Pancreas (tissue), 10 donors: ENCODE measurements at regions of chr19 and their contacts with region 1.

Region 1: GRCh38 chr19:3163230-3163886 is 15.2 kb upstream of the S1PR4 start:
- DNase-seq: peak in 5 of 6 donors; percentile 38 to 86 (median 70)
- ATAC-seq: peak; percentile 86 to 96 (median 94)
- H3K4me3 ChIP-seq: no peak overlapping the region
- H3K27ac ChIP-seq: no peak overlapping the region
- H3K4me1 ChIP-seq: peaks cover 0 to 4% (median 0%) of the 10 kb centered on the region in 3 donors
- H3K27me3 ChIP-seq: no peaks in the 10 kb centered on the region
- CTCF ChIP-seq: peak; percentile 81 to 97 (median 90)

Region 2: DNA sequence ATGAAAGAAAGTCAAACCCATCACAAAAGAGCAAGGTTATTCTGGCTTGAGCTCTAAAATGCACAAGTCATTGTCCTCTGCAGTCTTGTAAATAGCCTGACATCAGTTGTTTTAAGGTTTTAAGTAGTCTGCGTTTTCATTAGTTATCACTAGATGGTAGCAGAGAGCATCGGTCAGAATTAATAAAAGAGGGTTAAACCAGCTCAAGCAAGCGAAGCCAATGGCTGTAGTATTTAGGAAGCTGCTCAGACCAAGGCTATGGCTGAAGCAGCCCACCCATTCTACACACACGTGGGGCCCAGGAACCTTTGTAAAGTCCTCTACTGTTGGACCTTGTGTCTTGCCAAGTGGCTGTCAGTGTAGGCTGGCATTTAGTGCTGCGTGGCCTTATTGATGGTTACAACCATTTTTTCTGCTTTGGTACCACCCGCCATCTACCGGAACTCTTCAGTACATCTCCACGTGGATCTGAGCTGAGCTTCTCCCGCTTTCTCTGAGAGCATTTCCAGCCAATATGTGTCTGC is 275.9 kb before region 1 on chr19:
- intact Hi-C with region 1: loop called in 2 of 3 experiments (anchors 10 kb)
- DNase-seq: peak in 1 of 6 donors; percentile 35
- ATAC-seq: peak; percentile 66 to 97 (median 90)
- H3K4me3 ChIP-seq: no peak overlapping the region
- H3K27ac ChIP-seq: no peak overlapping the region
- H3K4me1 ChIP-seq: no peaks in the 10 kb centered on the region
- H3K27me3 ChIP-seq: no peaks in the 10 kb centered on the region
- CTCF ChIP-seq: peak in 3 of 4 donors; percentile 50 to 58 (median 57)

Region 3: GRCh38 chr19:2950286-2951124 is 212.9 kb before region 1 on chr19:
- intact Hi-C with region 1: loop called in 1 of 3 experiments (anchors 10 kb)
- DNase-seq: peak; percentile 100
- ATAC-seq: peak; percentile 88 to 94 (median 92)
- H3K4me3 ChIP-seq: peak overlapping the region; percentile 43 to 82 (median 66)
- H3K27ac ChIP-seq: peak overlapping the region; percentile 82 to 95 (median 91)
- H3K4me1 ChIP-seq: peaks cover 11 to 19% (median 16%) of the 10 kb centered on the region in 3 donors
- H3K27me3 ChIP-seq: no peaks in the 10 kb centered on the region
- CTCF ChIP-seq: no peak

Region 4: DNA sequence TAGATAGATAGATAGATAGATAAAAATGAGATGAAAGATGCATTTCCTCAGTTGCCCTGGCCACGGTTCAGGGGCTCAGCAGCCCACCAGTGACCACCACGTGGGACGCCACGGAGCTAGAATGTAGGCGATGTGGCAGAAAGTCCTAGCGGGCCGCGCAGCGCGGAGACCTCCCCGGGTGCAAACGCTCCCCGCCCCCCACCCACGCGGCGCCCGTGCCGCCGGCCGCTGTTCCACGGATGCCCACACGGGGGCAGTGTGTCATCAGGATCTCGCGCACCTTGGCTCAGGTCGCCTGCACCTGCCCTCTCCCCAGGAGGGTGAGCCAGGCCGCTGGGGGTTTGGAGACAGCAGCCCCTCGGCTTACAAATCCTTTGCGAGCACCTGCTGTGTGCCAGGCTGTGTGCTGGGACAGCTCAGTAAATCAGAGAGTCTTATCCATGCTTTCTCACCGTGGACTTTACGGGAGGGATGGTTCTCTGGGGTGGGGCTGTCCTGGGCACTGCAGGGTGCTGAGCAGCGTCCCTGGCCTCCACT is 87.4 kb before region 1 on chr19:
- intact Hi-C with region 1: loop called in 1 of 3 experiments (anchors 10 kb)
- DNase-seq: peak; percentile 47 to 92 (median 78)
- ATAC-seq: peak; percentile 89 to 99 (median 91)
- H3K4me3 ChIP-seq: no peak overlapping the region
- H3K27ac ChIP-seq: no peak overlapping the region
- H3K4me1 ChIP-seq: no peaks in the 10 kb centered on the region
- H3K27me3 ChIP-seq: no peaks in the 10 kb centered on the region
- CTCF ChIP-seq: peak; percentile 90 to 96 (median 94)